Ovary (tissue), 10 donors: ENCODE measurements at regions of chr11 and their contacts with region 1.

Region 1: DNA sequence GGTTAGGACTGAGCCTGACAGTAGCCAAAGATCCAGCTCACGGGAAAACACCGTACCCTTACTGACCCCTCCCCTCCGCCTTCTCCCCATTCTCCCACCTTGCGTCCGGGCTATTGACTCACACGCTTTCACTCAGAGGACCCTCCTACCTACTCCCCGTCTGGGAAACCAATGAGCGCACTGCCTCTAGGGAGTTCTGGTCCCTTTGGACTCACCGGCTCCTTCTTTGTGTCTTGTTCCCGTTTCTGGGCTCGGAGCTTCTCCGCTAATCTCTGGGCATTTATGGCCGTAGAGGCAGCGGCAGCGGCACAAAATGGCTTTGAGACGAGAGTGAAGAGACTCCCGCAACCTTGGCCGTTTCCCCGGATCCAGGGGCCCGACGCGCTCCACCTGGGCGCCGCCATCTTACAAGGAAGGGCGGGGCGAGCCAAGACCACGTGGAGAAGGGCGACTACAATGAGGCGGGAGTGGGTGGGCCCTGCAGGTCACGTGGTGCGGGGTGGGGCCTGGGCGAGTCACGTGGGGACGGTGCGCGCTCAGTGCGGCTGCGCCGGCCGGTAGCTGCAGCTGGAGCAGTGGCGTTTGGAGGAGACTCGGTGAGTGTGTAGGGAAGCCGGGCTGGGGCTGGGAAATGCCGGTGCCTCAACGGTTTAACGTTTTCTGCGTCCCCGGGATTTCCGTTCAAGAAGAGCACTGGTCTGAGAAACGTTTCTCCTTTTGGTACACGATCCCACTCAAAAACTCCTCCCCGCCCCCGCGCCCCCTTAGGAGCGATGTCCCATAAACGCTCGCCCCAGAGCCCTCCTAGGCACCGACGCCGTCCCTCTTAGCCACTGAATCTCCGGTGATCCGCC is at the starts of genes FAM118B and RPUSD4:
- DNase-seq: peak; percentile 98 to 99 (median 99)
- H3K4me3 ChIP-seq: peak within 1 kb of the TSS; percentile 87
- H3K27ac ChIP-seq: no peak within 1 kb of the TSS
- H3K4me1 ChIP-seq: peaks cover 3% of the 10 kb centered on the region
- H3K27me3 ChIP-seq: no peaks in the 10 kb centered on the region
- CTCF ChIP-seq: no peak
- EP300 ChIP-seq: no peak
- POLR2A ChIP-seq: peak; percentile 66
- total RNA-seq, gene FAM118B: 7.3 to 18.5 (median 12.7) TPM
- total RNA-seq, gene RPUSD4: 18.2 to 29.0 (median 26.2) TPM

Region 2: GRCh38 chr11:126163074-126163700 is 48.3 kb before region 1 on chr11:
- intact Hi-C with region 1: no loop called
- DNase-seq: peak in 1 of 5 donors; percentile 39
- H3K4me3 ChIP-seq: no peak overlapping the region
- H3K27ac ChIP-seq: no peak overlapping the region
- H3K4me1 ChIP-seq: no peaks in the 10 kb centered on the region
- H3K27me3 ChIP-seq: no peaks in the 10 kb centered on the region
- CTCF ChIP-seq: no peak
- EP300 ChIP-seq: peak; percentile 13
- POLR2A ChIP-seq: no peak

Region 3: DNA sequence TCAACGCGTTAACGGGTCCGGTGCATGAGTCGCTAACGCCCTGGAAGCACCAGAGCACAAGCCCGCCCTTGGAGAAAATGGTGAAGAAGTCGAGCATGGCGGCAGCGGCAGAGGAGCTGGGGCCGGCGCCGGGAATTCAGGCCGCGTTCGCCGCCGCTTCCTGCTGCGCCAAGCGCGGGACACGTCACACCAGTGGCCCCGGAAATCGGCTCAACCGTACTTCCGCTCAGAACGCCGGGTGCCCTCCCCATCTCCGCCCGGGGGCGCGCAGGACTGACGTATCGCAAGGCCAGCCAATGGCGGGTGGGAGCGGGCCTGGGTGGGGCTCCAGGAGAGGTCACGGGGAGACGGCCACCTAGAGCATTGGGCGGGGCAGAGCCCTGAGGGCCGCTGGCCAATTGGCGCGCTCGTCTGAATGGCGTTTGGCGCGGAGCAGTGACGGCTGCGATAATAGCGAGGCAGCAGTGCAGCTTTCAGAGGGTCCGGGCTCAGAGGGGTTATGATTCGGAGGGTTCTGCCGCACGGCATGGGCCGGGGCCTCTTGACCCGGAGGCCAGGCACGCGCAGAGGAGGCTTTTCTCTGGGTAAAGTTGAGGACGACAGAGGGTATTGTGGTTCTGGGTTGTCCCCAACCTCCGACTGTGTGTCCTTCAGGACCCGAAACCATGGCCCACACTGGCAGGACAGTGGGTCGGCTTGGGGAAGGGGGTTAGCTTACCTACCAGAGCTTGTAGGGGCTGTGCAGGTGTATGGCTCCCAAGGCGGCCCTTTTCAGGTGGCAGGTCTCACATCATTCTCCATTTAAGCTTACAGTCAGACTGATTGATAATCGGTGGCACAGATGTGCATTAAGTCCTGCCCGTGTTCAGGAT is 57.5 kb after region 1 on chr11 and contains the starts of genes FOXRED1 and SRPRA:
- intact Hi-C with region 1: loop called in 2 of 4 experiments (anchors 5 kb)
- DNase-seq: peak; percentile 99 to 100 (median 100)
- H3K4me3 ChIP-seq: peak within 1 kb of the TSS; percentile 82
- H3K27ac ChIP-seq: peak within 1 kb of the TSS; percentile 77 to 86
- H3K4me1 ChIP-seq: peaks cover 5% of the 10 kb centered on the region
- H3K27me3 ChIP-seq: no peaks in the 10 kb centered on the region
- CTCF ChIP-seq: no peak
- EP300 ChIP-seq: peak; percentile 70
- POLR2A ChIP-seq: peak; percentile 88
- total RNA-seq, gene FOXRED1: 10.3 to 24.8 (median 17.3) TPM
- total RNA-seq, gene SRPRA: 45.3 to 113 (median 86.0) TPM

Region 4: DNA sequence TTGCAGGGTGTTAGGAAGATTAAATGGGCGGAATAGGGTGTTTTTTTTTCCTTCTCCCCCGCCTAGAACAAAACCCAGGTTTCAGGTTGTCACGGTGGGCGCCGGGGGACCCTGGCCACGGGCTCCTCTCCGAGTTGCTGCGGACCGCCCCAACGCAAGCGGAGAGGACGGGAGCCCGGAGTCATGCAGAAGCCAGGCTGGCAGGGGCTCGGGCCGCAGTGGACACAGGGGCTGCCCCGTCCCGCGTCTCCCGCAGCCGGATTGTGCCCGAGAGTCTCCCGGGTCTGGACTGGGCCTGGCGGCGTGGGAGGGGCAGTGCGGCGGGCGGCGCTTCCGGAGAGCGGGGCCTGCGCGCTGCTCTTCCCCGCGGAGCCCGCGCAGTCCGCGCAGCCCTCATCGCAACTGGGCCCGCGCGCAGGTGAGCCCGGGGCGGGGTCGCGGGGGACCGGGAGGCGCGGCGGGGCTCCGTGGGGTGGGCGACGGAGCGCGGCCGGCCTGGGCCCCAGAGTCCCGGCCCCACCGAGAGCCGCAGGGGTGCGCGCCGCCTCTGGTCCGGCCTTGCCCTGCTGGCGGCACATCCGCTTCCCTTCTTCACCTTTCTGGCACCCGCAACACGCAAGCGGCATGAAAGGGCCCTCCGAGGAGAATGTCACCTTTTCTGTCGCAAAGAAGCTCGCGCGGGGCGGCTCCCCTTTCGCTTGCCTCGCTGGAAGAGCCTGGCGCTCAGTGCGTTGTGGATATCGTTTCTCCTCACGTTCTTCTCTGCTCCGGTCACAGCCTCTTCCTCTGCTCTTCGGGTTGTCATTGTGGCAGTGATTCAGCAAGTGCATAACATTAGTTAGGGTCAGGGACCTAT is 71.5 kb after region 1 on chr11 and contains the start of gene TIRAP:
- intact Hi-C with region 1: loop called in 1 of 4 experiments (anchors 5 kb)
- DNase-seq: peak; percentile 74 to 83 (median 79)
- H3K4me3 ChIP-seq: peak within 1 kb of the TSS; percentile 62
- H3K27ac ChIP-seq: peak within 1 kb of the TSS; percentile 83 to 95
- H3K4me1 ChIP-seq: peaks cover 4% of the 10 kb centered on the region
- H3K27me3 ChIP-seq: no peaks in the 10 kb centered on the region
- CTCF ChIP-seq: peak in 2 of 3 donors; percentile 30 to 47
- EP300 ChIP-seq: no peak
- POLR2A ChIP-seq: peak; percentile 22
- total RNA-seq, gene TIRAP: 7.6 to 16.0 (median 14.5) TPM

Region 5: GRCh38 chr11:126383339-126384318 is 172.2 kb after region 1 on chr11:
- intact Hi-C with region 1: no loop called
- DNase-seq: peak in 4 of 5 donors; percentile 21 to 30 (median 24)
- H3K4me3 ChIP-seq: no peak overlapping the region
- H3K27ac ChIP-seq: no peak overlapping the region
- H3K4me1 ChIP-seq: peaks cover 18% of the 10 kb centered on the region
- H3K27me3 ChIP-seq: no peaks in the 10 kb centered on the region
- CTCF ChIP-seq: no peak
- EP300 ChIP-seq: no peak
- POLR2A ChIP-seq: no peak